B cell (primary cell): ENCODE measurements at regions of chr13 and their contacts with region 1.

Region 1: DNA sequence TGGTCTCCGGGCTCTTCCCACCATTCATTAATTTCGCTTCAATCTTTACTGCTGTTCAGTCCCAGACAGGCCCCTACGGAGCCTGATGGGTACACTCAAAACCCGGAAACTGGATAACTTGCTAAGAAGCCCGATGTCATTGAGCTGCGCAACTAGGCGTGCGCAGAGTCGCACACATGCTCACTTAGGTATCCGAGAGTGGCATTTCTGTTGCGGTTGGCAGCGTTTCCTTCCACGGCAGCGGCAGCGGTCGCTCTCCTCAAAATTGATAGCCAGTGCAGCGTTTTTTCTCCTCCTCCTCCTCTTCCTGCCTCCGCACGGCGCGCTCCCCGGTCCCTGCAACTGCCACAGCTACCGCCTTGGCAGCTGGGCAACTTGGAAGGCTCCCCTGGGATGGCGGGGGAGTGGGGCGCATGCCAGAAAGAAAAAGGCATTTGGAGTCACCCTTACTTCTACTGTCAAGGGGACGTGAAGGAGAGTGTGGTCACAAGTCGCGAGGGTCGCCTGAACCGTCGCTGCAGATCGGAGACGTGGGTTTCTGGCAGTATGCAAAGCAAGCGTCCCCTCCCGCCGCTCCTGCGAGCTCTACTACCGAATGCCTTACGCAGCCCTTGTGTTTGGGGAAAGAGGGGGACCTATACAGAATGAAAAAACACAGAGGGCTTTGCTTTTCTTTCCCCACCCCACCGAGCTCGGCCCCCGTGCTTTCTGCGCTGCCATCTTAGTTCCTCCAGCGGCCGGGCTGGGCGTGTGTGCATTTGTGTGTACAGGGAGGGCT is 2.4 kb upstream of the MYCBP2 start:
- DNase-seq: peak; percentile 96
- ATAC-seq: peak; percentile 60
- H3K4me3 ChIP-seq: peak overlapping the region; percentile 80 to 99 (median 92)
- H3K4me3 Mint-ChIP-seq: peak overlapping the region; percentile 94
- H3K27ac ChIP-seq: peak overlapping the region; percentile 84 to 91
- H3K27ac Mint-ChIP-seq: peak overlapping the region; percentile 97
- H3K4me1 ChIP-seq: peaks cover 31 to 39% of the 10 kb centered on the region in 2 donors
- H3K4me1 Mint-ChIP-seq: peaks cover 57% of the 10 kb centered on the region
- H3K27me3 ChIP-seq: no peaks in the 10 kb centered on the region
- H3K27me3 Mint-ChIP-seq: no peaks in the 10 kb centered on the region
- CTCF ChIP-seq: no peak

Region 2: GRCh38 chr13:75549262-75550158 is 1779.8 kb before region 1 on chr13 and contains the start of gene UCHL3:
- CTCF ChIA-PET with region 1: no interaction called
- POLR2A ChIA-PET with region 1: no interaction called
- intact Hi-C with region 1: loop called (anchors 2 kb)
- DNase-seq: peak; percentile 98
- ATAC-seq: peak; percentile 92
- H3K4me3 ChIP-seq: peak within 1 kb of the TSS; percentile 67 to 96 (median 93)
- H3K4me3 Mint-ChIP-seq: peak within 1 kb of the TSS; percentile 95
- H3K27ac ChIP-seq: peak within 1 kb of the TSS; percentile 81 to 92
- H3K27ac Mint-ChIP-seq: peak within 1 kb of the TSS; percentile 99
- H3K4me1 ChIP-seq: peaks cover 13 to 14% of the 10 kb centered on the region in 2 donors
- H3K4me1 Mint-ChIP-seq: peaks cover 30% of the 10 kb centered on the region
- H3K27me3 ChIP-seq: no peaks in the 10 kb centered on the region
- H3K27me3 Mint-ChIP-seq: no peaks in the 10 kb centered on the region
- CTCF ChIP-seq: peak; percentile 89
- total RNA-seq, gene UCHL3: 13.5 and 16.8 TPM in 2 replicates

Region 3: GRCh38 chr13:77026818-77027585 is 302.3 kb before region 1 on chr13 and contains the start of gene FBXL3:
- CTCF ChIA-PET with region 1: no interaction called
- POLR2A ChIA-PET with region 1: interaction called, 4 read pairs
- intact Hi-C with region 1: loop called (anchors 2 kb)
- DNase-seq: peak; percentile 91
- ATAC-seq: peak; percentile 64
- H3K4me3 ChIP-seq: peak within 1 kb of the TSS; percentile 66 to 91 (median 88)
- H3K4me3 Mint-ChIP-seq: peak within 1 kb of the TSS; percentile 99
- H3K27ac ChIP-seq: peak within 1 kb of the TSS; percentile 84 to 95
- H3K27ac Mint-ChIP-seq: peak within 1 kb of the TSS; percentile 98
- H3K4me1 ChIP-seq: peaks cover 26 to 42% of the 10 kb centered on the region in 2 donors
- H3K4me1 Mint-ChIP-seq: peaks cover 49% of the 10 kb centered on the region
- H3K27me3 ChIP-seq: no peaks in the 10 kb centered on the region
- H3K27me3 Mint-ChIP-seq: no peaks in the 10 kb centered on the region
- CTCF ChIP-seq: no peak
- total RNA-seq, gene FBXL3: 78.0 and 79.5 TPM in 2 replicates

Region 4: GRCh38 chr13:77274126-77274525 is 55.2 kb before region 1 on chr13:
- CTCF ChIA-PET with region 1: interaction called, 4 read pairs
- POLR2A ChIA-PET with region 1: interaction called, 9 read pairs
- intact Hi-C with region 1: loop called (anchors 5 kb)
- DNase-seq: no peak
- ATAC-seq: no peak
- H3K4me3 ChIP-seq: no peak overlapping the region
- H3K4me3 Mint-ChIP-seq: no peak overlapping the region
- H3K27ac ChIP-seq: peak overlapping the region in 1 of 2 donors; percentile 53
- H3K27ac Mint-ChIP-seq: no peak overlapping the region
- H3K4me1 ChIP-seq: no peaks in the 10 kb centered on the region
- H3K4me1 Mint-ChIP-seq: peaks cover 6% of the 10 kb centered on the region
- H3K27me3 ChIP-seq: no peaks in the 10 kb centered on the region
- H3K27me3 Mint-ChIP-seq: no peaks in the 10 kb centered on the region
- CTCF ChIP-seq: peak; percentile 40

Region 5: DNA sequence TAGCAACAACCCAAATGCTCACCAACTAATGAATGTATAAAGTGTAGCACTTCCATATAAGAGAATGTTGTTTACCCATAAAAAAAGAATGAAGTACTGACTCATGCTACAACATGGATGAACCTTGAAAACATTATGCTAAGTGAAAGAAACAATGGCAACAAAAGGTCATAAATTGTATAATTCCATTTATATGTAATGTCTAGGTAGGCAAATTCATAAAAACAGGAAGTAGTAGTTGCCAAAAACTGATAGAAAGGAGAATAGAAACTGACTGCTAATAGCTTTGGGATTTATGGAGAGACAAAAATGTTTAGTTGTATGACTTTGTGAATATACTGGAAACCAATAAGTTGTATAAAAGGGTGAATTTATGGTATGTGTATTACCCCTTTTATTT is 24.0 kb before region 1 on chr13:
- CTCF ChIA-PET with region 1: interaction called, 8 read pairs
- POLR2A ChIA-PET with region 1: interaction called, 10 read pairs
- intact Hi-C with region 1: loop called (anchors 1 kb)
- DNase-seq: peak; percentile 52
- ATAC-seq: peak; percentile 48
- H3K4me3 ChIP-seq: peak overlapping the region in 1 of 5 experiments; percentile 26
- H3K4me3 Mint-ChIP-seq: peak overlapping the region; percentile 36
- H3K27ac ChIP-seq: peak overlapping the region in 1 of 2 donors; percentile 60
- H3K27ac Mint-ChIP-seq: peak overlapping the region; percentile 85
- H3K4me1 ChIP-seq: peaks cover 54 to 84% of the 10 kb centered on the region in 2 donors
- H3K4me1 Mint-ChIP-seq: peaks cover 83% of the 10 kb centered on the region
- H3K27me3 ChIP-seq: no peaks in the 10 kb centered on the region
- H3K27me3 Mint-ChIP-seq: no peaks in the 10 kb centered on the region
- CTCF ChIP-seq: no peak

Region 6: DNA sequence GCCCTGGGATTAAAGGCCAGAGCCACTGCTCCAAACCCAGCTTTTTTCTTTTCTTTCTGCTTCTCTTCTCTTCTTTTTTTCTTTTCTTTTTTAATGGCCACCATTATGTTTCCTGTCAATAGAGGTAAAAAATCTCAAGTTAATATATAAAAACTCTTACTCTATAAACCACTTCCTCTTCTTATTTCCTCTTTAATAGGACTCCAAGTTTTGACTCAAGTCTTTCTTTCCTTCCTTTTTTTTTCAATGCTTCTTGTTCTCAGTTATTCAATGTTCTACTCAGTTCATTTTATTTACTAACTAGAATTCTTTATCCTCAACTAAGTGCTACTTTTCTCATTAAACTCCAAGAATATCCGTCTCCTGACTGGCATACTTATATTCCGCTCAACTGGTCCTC is 24.7 kb after region 1 on chr13:
- CTCF ChIA-PET with region 1: interaction called, 4 read pairs
- POLR2A ChIA-PET with region 1: interaction called, 3 read pairs
- intact Hi-C with region 1: loop called (anchors 2 kb)
- DNase-seq: peak; percentile 55
- ATAC-seq: peak; percentile 70
- H3K4me3 ChIP-seq: peak overlapping the region in 1 of 5 experiments; percentile 26
- H3K4me3 Mint-ChIP-seq: peak overlapping the region; percentile 11
- H3K27ac ChIP-seq: peak overlapping the region; percentile 55 to 82
- H3K27ac Mint-ChIP-seq: peak overlapping the region; percentile 81
- H3K4me1 ChIP-seq: peaks cover 19 to 22% of the 10 kb centered on the region in 2 donors
- H3K4me1 Mint-ChIP-seq: peaks cover 30% of the 10 kb centered on the region
- H3K27me3 ChIP-seq: no peaks in the 10 kb centered on the region
- H3K27me3 Mint-ChIP-seq: no peaks in the 10 kb centered on the region
- CTCF ChIP-seq: no peak

Region 7: DNA sequence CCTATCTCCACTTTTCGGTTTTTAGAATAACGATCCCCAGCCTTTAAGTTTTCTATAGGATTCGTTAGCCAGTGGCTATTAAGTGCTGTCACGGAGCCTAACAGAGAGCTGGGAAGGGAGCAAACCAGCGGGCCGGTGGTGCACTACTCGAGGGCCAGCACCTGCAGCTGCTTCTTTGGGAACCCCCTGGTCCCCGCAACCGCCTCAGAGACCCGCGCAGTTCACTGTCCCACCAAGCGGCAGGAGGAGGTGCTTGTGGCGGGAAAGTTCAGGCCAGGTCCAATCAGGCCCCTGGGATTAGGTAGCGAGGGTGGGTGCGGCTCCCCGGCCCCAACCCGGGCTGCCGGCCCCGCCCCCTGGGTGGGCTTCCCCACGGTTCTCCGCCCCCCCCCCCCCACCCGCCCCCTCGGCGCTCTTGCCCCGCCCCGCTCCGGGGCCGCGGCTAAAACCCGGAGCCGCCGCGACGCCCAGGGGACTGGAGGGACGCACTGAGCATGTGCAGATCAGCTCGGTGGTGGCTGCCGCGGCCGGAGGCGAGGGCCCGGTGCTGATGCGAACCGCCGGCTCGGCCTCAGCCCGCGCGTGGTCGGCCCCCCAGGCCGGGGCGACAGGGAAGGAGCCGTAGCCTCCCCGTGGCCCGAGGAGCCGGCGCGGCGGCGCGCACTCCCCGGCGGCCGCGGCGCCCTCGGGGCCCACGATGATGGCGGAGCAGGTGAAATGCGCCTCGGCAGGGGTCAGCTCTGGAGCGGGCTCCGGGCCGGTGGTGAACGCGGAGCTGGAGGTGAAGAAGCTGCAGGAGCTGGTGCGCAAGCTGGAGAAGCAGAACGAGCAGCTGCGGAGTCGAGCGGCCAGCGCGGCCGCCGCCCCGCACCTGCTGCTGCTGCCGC is 368.1 kb after region 1 on chr13 and contains the start of gene SLAIN1:
- CTCF ChIA-PET with region 1: no interaction called
- POLR2A ChIA-PET with region 1: no interaction called
- intact Hi-C with region 1: loop called (anchors 5 kb)
- DNase-seq: peak; percentile 91
- ATAC-seq: peak; percentile 87
- H3K4me3 ChIP-seq: peak within 1 kb of the TSS; percentile 71 to 97 (median 80)
- H3K4me3 Mint-ChIP-seq: peak within 1 kb of the TSS; percentile 97
- H3K27ac ChIP-seq: peak within 1 kb of the TSS; percentile 71 to 84
- H3K27ac Mint-ChIP-seq: peak within 1 kb of the TSS; percentile 79
- H3K4me1 ChIP-seq: peaks cover 16 to 18% of the 10 kb centered on the region in 2 donors
- H3K4me1 Mint-ChIP-seq: peaks cover 26% of the 10 kb centered on the region
- H3K27me3 ChIP-seq: no peaks in the 10 kb centered on the region
- H3K27me3 Mint-ChIP-seq: no peaks in the 10 kb centered on the region
- CTCF ChIP-seq: no peak
- total RNA-seq, gene SLAIN1: 25.2 and 29.5 TPM in 2 replicates